A549 (cell line): ENCODE measurements at regions of chr9 and their contacts with region 1.

Region 1: DNA sequence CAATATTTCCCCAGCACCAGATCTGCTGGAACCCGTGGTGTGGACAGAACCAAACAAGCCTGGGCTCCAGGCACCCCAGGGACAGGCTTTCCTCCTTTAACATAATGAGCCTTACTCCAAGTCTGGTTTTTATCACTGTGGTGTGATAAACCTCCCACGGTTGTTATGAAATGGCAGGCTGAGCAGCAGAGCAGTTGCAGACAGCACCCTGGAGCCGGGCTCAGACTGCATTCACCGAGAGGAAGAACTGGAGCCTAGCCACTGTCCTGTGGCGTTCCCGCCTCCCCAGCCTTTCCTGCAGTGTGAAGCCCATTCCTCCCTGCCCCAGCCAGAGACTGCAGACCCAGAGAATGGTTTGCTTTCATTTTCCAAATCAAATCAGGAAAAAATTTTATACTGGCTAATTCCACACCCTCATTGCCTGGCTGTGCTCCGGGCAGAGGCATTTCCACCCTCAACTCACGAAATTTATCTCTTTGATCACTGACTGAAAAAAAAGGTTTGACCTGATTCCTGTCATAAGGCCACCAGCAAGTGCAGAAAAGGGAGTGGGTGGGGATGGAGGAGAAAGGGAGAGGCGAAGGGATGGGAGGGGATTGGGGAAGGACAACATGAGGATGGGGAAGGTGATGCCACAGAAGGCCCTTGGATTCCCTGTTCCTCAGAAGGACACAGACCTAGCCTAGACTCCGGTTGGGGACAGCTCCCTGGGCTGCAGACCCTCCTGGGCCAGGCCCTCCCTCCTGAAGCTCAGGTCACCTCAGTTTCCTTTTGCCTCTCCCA is 18.9 kb downstream of the IPPK start:
- DNase-seq: no peak
- ATAC-seq: no peak
- H3K4me3 ChIP-seq: no peak overlapping the region
- H3K27ac ChIP-seq: no peak overlapping the region
- H3K4me1 ChIP-seq: no peaks in the 10 kb centered on the region
- CTCF ChIP-seq: no peak
- EP300 ChIP-seq: no peak
- POLR2A ChIP-seq: no peak
- RAD21 ChIP-seq: no peak

Region 2: DNA sequence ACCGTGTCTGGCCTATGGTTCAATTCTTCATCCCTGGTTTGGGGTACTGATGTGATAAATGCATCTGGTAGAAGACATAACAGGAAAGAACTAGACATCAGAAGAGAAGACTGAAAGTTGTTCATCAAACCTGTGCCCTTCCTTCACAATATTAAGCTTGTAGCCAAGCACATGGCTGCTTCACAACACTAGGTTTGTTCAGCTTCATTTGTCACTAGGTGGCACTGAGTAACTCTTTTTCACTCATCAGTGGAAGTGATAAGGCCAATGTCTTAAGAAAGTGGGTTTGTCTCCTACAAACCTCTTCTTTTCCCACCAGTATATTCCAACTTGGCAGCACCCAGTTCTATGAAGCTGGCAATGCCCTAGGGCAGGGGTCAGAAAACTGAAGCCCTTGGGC is 199.9 kb after region 1 on chr9:
- CTCF ChIA-PET with region 1: no interaction called
- POLR2A ChIA-PET with region 1: interaction called, 14 read pairs
- DNase-seq: peak in 1 of 2 experiments; percentile 21
- ATAC-seq: no peak
- H3K4me3 ChIP-seq: no peak overlapping the region
- H3K27ac ChIP-seq: no peak overlapping the region
- H3K4me1 ChIP-seq: no peaks in the 10 kb centered on the region
- CTCF ChIP-seq: no peak
- EP300 ChIP-seq: no peak
- POLR2A ChIP-seq: no peak
- RAD21 ChIP-seq: no peak